Activated CD4-positive, alpha-beta T cell treated with anti-CD3 and anti-CD28 coated beads, Interleukin-2, amount 10 ng/mL, durations not matched to agents 24 days and 14 days (primary cell): ENCODE measurements at regions of chr11 and their contacts with region 1.

Region 1: GRCh38 chr11:95816037-95816436 is 25.7 kb downstream of the CEP57 start:
- DNase-seq: no peak
- H3K4me3 Mint-ChIP-seq: no peak overlapping the region
- H3K27ac Mint-ChIP-seq: peak overlapping the region; percentile 35
- H3K4me1 Mint-ChIP-seq: peaks cover 3% of the 10 kb centered on the region
- H3K27me3 Mint-ChIP-seq: no peaks in the 10 kb centered on the region

Region 2: DNA sequence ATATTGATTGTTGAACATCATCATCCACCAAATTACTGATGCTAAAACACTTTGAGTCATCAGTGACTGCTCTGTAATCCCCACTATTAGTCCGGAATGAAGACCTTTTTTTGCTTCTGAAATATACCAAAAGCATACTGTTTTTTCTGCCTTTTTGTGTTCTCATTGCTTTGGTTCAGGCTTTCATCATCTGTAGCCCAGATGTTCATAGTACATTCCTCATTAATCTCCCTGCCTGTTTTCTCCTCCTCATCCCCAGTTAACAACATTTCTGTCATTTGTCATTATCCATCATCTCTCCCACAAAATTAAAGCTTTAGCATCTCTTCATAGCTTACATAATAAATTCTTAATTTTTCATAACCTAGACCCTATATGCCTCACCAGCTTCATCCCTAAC is 16.5 kb before region 1 on chr11:
- intact Hi-C with region 1: loop called (anchors 2 kb)
- DNase-seq: no peak
- H3K4me3 Mint-ChIP-seq: no peak overlapping the region
- H3K27ac Mint-ChIP-seq: no peak overlapping the region
- H3K4me1 Mint-ChIP-seq: peaks cover 18% of the 10 kb centered on the region
- H3K27me3 Mint-ChIP-seq: no peaks in the 10 kb centered on the region

Region 3: GRCh38 chr11:95897731-95898130 is 81.7 kb after region 1 on chr11:
- intact Hi-C with region 1: no loop called
- DNase-seq: no peak
- H3K4me3 Mint-ChIP-seq: no peak overlapping the region
- H3K27ac Mint-ChIP-seq: no peak overlapping the region
- H3K4me1 Mint-ChIP-seq: peaks cover 2% of the 10 kb centered on the region
- H3K27me3 Mint-ChIP-seq: no peaks in the 10 kb centered on the region